T-cell (primary cell): ENCODE measurements at regions of chr6 and their contacts with region 1.

Region 1: GRCh38 chr6:97423190-97423589 is 140.2 kb upstream of the MMS22L start:
- DNase-seq: no peak
- ATAC-seq: no peak
- H3K4me3 ChIP-seq: no peak overlapping the region
- H3K4me3 Mint-ChIP-seq: no peak overlapping the region
- H3K27ac ChIP-seq: no peak overlapping the region
- H3K27ac Mint-ChIP-seq: no peak overlapping the region
- H3K4me1 ChIP-seq: no peaks in the 10 kb centered on the region
- H3K4me1 Mint-ChIP-seq: no peaks in the 10 kb centered on the region
- H3K27me3 ChIP-seq: peaks cover 0 to 4% of the 10 kb centered on the region in 2 experiments
- H3K27me3 Mint-ChIP-seq: peaks cover 5 to 14% of the 10 kb centered on the region in 2 donors

Region 2: DNA sequence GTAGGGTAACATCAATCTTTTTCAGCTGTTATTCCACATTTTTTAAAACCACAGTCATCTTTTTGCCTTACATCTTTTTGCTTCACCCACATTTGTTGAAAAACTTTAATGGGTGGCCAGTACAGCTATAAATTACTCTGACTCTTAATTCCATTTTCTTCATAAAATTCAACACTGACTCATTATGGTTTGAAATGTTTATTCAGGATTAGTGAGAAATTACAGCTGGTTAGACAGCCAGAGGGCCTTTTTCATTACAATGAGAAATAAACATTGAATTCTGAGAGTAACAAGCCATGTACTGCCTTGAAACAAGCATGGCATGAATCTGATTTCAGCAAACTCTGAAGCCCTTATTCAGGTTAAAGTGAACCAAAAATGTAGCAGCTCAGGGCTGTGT is 545.0 kb before region 1 on chr6:
- CTCF ChIA-PET with region 1: interaction called in 1 of 2 experiments, 10 read pairs
- POLR2A ChIA-PET with region 1: no interaction called
- DNase-seq: no peak
- ATAC-seq: no peak
- H3K4me3 ChIP-seq: no peak overlapping the region
- H3K4me3 Mint-ChIP-seq: no peak overlapping the region
- H3K27ac ChIP-seq: no peak overlapping the region
- H3K27ac Mint-ChIP-seq: no peak overlapping the region
- H3K4me1 ChIP-seq: no peaks in the 10 kb centered on the region
- H3K4me1 Mint-ChIP-seq: peaks cover 0 to 2% (median 0%) of the 10 kb centered on the region in 3 donors
- H3K27me3 ChIP-seq: no peaks in the 10 kb centered on the region
- H3K27me3 Mint-ChIP-seq: peaks cover 0 to 2% of the 10 kb centered on the region in 2 donors

Region 3: DNA sequence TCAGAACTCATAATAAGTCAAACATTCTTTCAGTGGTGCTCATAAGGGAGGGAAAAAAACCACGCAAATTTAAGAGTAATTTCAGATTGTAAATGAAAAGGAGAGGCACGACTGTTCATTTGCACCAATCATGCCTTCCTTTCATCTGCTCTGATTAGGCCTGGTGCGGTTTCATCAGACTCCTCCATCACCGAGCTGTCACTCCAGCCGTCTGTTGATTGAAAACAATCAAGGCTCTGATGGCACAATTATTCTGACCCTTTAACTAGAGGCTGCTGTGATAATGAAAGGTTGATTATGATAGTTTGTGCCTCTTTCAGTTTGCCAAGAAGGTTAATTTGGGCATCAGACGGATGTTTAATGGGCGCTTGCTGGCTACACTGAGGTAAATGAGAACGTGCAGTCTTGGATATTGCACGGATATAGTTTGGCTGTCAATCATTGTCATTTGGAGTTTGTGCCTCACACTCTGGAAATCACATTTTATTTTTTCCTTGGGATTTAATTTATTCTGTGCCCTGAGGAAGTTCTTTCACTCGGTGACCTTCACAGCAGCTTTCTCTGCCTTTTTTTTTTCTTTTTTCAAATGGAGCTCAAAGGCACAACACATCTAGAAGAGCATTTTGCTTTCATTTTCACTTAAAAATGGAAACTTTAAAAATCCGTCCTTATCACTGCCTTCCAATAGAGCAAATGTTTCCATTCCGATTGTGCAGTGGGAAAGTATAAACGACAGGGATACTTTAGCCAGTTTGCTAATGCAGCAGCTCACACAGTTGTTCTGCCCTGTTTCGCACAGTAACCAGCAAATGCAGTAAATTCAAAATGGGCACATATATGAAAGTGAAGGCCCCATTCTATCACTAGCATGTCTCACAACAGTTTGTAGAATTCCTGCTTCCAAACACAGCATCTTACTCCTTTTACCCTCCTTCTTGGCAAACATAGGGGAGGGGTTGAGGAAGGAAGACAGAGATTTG is 325.8 kb before region 1 on chr6:
- CTCF ChIA-PET with region 1: no interaction called
- POLR2A ChIA-PET with region 1: no interaction called
- DNase-seq: no peak
- ATAC-seq: no peak
- H3K4me3 ChIP-seq: no peak overlapping the region
- H3K4me3 Mint-ChIP-seq: no peak overlapping the region
- H3K27ac ChIP-seq: no peak overlapping the region
- H3K27ac Mint-ChIP-seq: no peak overlapping the region
- H3K4me1 ChIP-seq: no peaks in the 10 kb centered on the region
- H3K4me1 Mint-ChIP-seq: peaks cover 0 to 7% (median 0%) of the 10 kb centered on the region in 3 donors
- H3K27me3 ChIP-seq: no peaks in the 10 kb centered on the region
- H3K27me3 Mint-ChIP-seq: no peaks in the 10 kb centered on the region

Region 4: GRCh38 chr6:97401533-97401932 is 21.7 kb before region 1 on chr6:
- CTCF ChIA-PET with region 1: no interaction called
- POLR2A ChIA-PET with region 1: no interaction called
- DNase-seq: no peak
- ATAC-seq: no peak
- H3K4me3 ChIP-seq: no peak overlapping the region
- H3K4me3 Mint-ChIP-seq: no peak overlapping the region
- H3K27ac ChIP-seq: no peak overlapping the region
- H3K27ac Mint-ChIP-seq: no peak overlapping the region
- H3K4me1 ChIP-seq: no peaks in the 10 kb centered on the region
- H3K4me1 Mint-ChIP-seq: no peaks in the 10 kb centered on the region
- H3K27me3 ChIP-seq: no peaks in the 10 kb centered on the region
- H3K27me3 Mint-ChIP-seq: peaks cover 2 to 7% of the 10 kb centered on the region in 2 donors